PC-9 (cell line): ENCODE measurements at regions of chr12 and their contacts with region 1.

Region 1: GRCh38 chr12:51980051-51980808 is 26.5 kb upstream of the TAMALIN start:
- DNase-seq: peak in 1 of 2 experiments; percentile 43
- H3K4me3 ChIP-seq: no peak overlapping the region
- H3K27ac ChIP-seq: no peak overlapping the region
- H3K4me1 ChIP-seq: no peaks in the 10 kb centered on the region
- H3K27me3 ChIP-seq: no peaks in the 10 kb centered on the region
- CTCF ChIP-seq: peak; percentile 91

Region 2: GRCh38 chr12:51246254-51246853 is 733.9 kb before region 1 on chr12:
- CTCF ChIA-PET with region 1: no interaction called
- POLR2A ChIA-PET with region 1: no interaction called
- intact Hi-C with region 1: no loop called
- DNase-seq: no peak
- H3K4me3 ChIP-seq: no peak overlapping the region
- H3K27ac ChIP-seq: no peak overlapping the region
- H3K4me1 ChIP-seq: peaks cover under 1% of the 10 kb centered on the region; the same call in 1 of the 2 replicates
- H3K27me3 ChIP-seq: no peaks in the 10 kb centered on the region
- CTCF ChIP-seq: no peak

Region 3: DNA sequence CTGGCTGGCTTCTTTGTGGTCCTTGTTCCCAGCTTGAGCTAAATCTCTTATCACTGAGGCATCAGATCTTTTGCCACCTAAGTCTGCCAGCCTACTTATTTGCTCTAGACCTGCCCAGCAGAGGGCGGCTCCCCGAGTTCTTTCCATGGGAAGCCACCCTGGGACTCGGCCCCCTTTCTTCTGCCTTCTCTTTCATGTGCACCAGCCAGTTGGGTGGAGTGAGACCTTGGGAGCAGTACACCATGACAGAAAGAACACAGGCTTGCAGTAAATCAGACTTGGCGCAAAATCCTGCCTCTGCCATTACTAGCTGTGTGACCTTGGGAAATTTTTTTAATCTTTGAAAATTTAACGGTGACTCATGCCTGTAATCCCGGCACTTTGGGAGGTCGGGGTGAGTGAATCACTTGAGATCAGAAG is 717.5 kb before region 1 on chr12:
- CTCF ChIA-PET with region 1: interaction called, 10 read pairs
- POLR2A ChIA-PET with region 1: no interaction called
- intact Hi-C with region 1: no loop called
- DNase-seq: peak in 1 of 2 experiments; percentile 41
- H3K4me3 ChIP-seq: no peak overlapping the region
- H3K27ac ChIP-seq: no peak overlapping the region
- H3K4me1 ChIP-seq: peaks cover 13% of the 10 kb centered on the region; the same call in 1 of the 2 replicates
- H3K27me3 ChIP-seq: no peaks in the 10 kb centered on the region
- CTCF ChIP-seq: peak; percentile 45

Region 4: DNA sequence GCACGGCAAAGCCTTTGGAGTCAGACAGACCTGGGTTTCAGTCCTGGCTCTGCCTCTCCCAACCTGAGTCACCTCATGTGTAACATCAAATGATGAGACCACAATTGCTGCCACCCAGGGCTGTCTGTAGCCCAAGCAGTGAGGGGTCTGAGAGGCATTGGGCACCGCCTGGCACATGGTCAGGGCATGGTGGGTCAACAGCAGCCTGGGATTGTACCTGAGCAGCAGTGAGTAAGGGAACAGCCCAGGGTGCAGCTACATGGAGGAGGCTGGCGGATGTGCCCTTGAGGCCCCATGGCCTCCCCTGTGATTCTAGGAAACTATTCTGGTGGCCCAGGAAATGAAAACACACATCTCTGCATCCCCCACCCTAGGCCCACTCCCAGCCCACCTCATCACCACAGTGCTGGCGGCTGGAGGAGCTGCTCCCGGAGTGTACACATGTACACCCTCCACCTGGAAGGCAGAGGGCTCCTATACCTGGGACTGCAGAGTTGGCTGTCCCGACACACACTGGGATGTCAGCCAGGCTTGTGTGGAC is 84.7 kb before region 1 on chr12:
- CTCF ChIA-PET with region 1: interaction called, 5 read pairs
- POLR2A ChIA-PET with region 1: no interaction called
- intact Hi-C with region 1: loop called (anchors 1 kb)
- DNase-seq: no peak
- H3K4me3 ChIP-seq: no peak overlapping the region
- H3K27ac ChIP-seq: no peak overlapping the region
- H3K4me1 ChIP-seq: no peaks in the 10 kb centered on the region
- H3K27me3 ChIP-seq: peaks cover 36% of the 10 kb centered on the region
- CTCF ChIP-seq: no peak

Region 5: DNA sequence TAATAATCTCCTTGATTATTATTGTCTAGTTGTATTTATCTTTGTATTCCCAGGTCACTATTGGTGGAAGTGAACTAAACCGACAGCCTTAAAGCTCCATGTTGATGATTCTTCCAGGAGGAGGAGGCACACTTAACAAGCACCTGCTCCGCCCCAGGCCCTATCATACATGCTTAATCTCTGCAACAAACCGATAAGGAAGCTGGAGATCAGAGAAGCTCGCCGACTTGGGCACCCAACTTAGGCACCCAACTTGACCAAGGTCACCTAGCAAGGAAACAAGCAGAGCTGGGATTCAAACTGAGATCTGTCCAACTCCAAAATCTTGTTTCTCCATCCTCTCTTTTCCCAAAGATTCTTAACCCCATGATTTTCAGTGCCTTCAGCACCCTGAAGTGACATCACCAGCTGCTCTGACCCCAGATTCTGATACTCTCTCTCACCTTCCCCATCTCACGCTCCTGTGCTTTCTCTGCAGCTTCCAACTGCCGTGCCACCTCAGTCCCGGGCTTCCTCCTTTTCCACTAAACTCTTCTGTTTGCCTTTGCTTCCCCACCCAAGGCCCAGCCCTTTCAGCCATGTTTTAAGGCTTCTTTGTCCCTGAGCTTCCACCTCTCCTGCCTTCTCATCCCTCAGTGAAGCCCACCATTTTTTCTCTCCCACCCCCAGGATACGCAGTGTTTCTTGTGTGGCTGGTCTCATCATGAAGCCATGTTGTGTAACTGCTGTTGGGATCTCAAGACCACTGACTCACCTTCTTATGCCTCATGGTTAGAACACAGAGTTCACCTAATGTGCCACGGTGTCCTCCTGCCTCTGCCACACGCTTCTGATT is 962.1 kb after region 1 on chr12:
- CTCF ChIA-PET with region 1: no interaction called
- POLR2A ChIA-PET with region 1: interaction called, 10 read pairs
- intact Hi-C with region 1: no loop called
- DNase-seq: no peak
- H3K4me3 ChIP-seq: no peak overlapping the region
- H3K27ac ChIP-seq: peak overlapping the region; percentile 100
- H3K4me1 ChIP-seq: peaks cover 48% of the 10 kb centered on the region
- H3K27me3 ChIP-seq: no peaks in the 10 kb centered on the region
- CTCF ChIP-seq: no peak

Region 6: DNA sequence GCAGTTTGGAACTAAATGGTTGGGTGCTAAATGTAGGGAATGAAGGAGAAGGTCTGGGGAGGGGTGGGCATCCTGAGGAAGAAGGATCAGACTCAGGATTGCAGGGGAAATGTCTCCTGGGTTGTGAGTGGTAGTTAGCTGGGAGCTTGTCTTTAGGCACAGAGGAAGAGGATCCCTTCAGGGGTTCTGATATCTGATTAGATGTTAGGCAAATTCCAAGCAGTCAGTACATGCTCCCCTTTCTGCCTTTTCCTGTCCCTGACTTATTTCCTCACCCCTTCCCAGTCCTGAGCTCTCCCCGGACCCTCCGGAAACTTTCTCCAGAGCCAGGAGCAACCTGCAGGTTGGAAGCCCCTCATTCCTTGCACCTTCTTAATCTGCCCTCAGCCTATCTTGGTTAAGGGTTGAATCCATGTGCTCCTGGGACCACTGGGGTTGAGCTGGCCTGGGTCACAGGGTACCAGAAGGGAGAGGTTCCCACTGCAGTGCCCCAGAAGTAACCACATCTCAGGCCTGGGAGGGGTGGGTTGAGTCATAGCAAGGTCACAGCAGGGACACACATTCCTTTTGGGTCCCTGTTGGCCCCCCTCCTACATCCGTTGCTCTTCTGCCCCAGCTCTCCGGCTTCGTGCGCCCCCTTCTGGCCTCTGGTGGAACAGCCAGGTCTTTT is 1118.9 kb after region 1 on chr12:
- CTCF ChIA-PET with region 1: no interaction called
- POLR2A ChIA-PET with region 1: no interaction called
- intact Hi-C with region 1: no loop called
- DNase-seq: peak; percentile 90 to 92
- H3K4me3 ChIP-seq: peak overlapping the region; percentile 96
- H3K27ac ChIP-seq: peak overlapping the region; percentile 87
- H3K4me1 ChIP-seq: peaks cover 22% of the 10 kb centered on the region
- H3K27me3 ChIP-seq: no peaks in the 10 kb centered on the region
- CTCF ChIP-seq: peak; percentile 95